ENCODE measurements at regions of chr5 and their contacts with region 1.

Region 1: DNA sequence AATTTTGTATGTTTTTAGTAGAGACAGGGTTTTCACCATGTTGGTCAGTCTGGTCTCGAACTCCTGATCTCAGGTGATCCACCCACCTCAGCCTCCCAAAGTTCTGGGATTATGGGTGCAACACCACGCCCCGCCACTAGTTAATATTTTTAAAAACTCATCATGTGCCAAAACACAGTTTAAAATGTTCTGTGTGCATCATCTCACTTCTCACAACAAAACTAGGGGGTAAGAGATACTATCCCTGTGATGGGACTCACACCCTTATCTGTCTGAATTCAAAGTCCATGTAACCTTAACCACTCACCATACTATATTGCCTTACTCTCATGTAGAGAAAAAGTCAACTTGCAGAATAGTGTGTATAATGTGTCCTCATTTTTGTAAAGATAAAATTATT is 2.6 kb downstream of the PKD2L2 start:
- DNase-seq: no peak
- ATAC-seq: peak in 3 of 4 donors; percentile 13 to 21 (median 16)
- H3K4me3 ChIP-seq: no peak overlapping the region
- H3K27ac ChIP-seq: peak overlapping the region; percentile 77
- H3K4me1 ChIP-seq: peaks cover 21% of the 10 kb centered on the region
- H3K27me3 ChIP-seq: no peaks in the 10 kb centered on the region
- CTCF ChIP-seq: peak; percentile 40

Region 2: DNA sequence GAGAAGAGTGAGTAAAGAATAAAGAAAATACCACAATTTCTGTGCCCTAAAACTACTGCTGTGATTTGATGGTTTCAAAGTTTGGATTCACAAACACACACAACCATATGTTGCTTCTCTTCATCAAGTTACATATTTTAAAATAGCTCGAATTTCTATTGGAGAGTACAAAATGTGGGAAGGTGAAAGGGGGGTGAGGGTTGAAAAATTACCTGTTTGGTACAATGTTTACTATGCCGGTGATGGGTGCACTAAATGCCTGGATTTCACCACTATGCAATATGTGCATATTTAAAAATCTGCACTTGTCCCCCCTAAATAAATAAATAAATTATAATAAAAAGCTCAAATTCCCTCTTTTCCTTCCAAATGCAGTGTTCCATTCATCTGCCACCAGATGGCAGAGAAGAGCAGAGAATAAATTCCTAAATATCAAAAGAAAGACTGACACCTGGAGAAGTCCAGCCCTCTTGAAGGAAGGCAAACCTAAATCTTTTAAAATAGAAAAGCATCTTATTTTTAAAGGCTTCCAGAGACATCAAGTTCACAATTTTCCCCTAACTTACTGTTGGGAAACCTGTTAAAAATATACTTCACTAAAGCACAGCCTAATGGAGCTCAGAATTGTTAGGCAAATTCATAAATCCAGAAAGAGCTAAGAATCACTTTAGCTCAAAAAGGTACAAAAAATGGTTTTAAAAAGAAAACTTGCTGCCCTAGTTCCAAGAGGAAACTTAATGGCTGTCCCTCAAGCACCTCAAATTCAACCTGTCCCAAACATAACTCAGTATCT is 112.9 kb before region 1 on chr5:
- intact Hi-C with region 1: loop called in 1 of 2 experiments (anchors 10 kb)
- DNase-seq: no peak
- ATAC-seq: peak in 2 of 4 donors; percentile 54 to 76
- H3K4me3 ChIP-seq: no peak overlapping the region
- H3K27ac ChIP-seq: no peak overlapping the region
- H3K4me1 ChIP-seq: peaks cover 8% of the 10 kb centered on the region
- H3K27me3 ChIP-seq: no peaks in the 10 kb centered on the region
- CTCF ChIP-seq: peak; percentile 90

Region 3: GRCh38 chr5:137954131-137954879 is 62.5 kb after region 1 on chr5:
- intact Hi-C with region 1: loop called in 1 of 2 experiments (anchors 10 kb)
- DNase-seq: no peak
- ATAC-seq: peak; percentile 86 to 93 (median 92)
- H3K4me3 ChIP-seq: no peak overlapping the region
- H3K27ac ChIP-seq: peak overlapping the region; percentile 72
- H3K4me1 ChIP-seq: peaks cover 12% of the 10 kb centered on the region
- H3K27me3 ChIP-seq: no peaks in the 10 kb centered on the region
- CTCF ChIP-seq: no peak